ENCODE measurements at regions of chr14 and their contacts with region 1.

Region 1: DNA sequence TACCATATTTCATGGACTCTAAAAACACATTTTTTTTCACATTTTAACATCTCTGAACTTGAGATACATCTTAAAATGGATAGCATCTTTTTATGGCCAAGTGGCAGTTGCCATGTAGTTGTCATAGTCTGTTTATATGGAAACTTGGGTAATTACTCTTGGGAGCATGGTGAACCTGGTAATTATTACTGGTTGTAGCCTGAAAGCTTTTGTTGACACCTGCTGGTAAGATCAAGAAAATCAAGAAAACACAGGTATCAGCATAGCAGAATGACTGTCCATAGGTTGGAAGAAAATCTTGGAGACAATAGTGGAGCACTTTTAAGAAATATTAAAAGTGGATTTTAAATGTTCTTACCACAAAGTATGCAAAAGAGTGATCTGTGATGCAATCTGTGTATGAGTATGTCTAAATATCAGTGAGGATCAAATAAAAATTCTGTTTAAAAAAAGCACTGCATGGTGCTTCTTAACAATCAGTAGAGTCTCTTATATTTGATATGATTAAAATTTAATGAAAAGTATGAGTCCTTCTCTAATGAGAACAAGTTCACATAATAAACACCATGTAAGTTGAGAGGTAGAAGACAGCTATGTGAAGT is 44.2 kb downstream of the TTC8 start:
- DNase-seq: peak in 3 of 14 experiments; percentile 23 to 35 (median 35)
- ATAC-seq: no peak
- H3K4me3 ChIP-seq: no peak overlapping the region
- H3K4me3 Mint-ChIP-seq: no peak overlapping the region
- H3K27ac ChIP-seq: no peak overlapping the region
- H3K27ac Mint-ChIP-seq: no peak overlapping the region
- H3K4me1 ChIP-seq: no peaks in the 10 kb centered on the region
- H3K4me1 Mint-ChIP-seq: no peaks in the 10 kb centered on the region
- H3K27me3 ChIP-seq: no peaks in the 10 kb centered on the region
- H3K27me3 Mint-ChIP-seq: no peaks in the 10 kb centered on the region
- CTCF ChIP-seq: peak; percentile 58

Region 2: DNA sequence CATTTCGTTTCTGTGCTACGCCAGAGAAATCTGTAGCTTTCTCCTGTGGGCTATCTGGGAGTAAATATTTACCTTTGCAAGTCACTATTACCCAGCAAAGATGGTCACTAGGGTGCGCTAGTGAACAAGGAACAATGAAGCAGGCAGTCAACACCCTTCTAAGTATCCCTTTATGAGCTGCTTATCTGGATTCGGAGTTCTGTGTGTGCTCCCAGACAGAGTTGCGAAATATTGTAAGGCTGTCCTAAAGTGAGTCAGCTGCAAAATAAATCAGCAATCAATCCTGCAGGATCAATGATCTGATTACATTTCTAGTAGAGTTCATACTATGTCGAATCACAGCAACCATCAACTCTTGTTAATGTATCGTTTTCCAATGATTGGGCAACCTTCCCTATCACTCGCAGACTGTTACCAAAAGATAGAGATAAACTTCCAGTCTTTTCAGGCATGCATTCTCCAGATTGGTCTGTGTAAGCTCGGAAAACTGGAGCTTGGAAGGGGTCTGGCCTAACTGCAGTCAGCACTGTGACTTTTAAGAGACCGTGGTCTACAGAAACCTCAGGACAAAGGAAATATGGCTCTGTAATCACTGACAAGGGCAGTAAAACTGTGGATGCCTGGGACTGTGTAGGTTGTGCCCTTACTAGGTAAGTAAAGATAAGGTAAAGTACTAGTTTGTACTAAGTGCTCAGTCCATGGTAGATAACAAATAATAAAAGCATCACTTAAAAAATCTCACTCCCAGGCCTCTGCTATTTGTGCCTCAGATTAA is 679.1 kb before region 1 on chr14:
- CTCF ChIA-PET with region 1: no interaction called
- POLR2A ChIA-PET with region 1: no interaction called
- intact Hi-C with region 1: loop called in 1 of 2 experiments (anchors 10 kb)
- DNase-seq: peak in 11 of 14 experiments; percentile 9 to 67 (median 29)
- ATAC-seq: no peak
- H3K4me3 ChIP-seq: no peak overlapping the region
- H3K4me3 Mint-ChIP-seq: no peak overlapping the region
- H3K27ac ChIP-seq: no peak overlapping the region
- H3K27ac Mint-ChIP-seq: no peak overlapping the region
- H3K4me1 ChIP-seq: peaks cover 6% of the 10 kb centered on the region
- H3K4me1 Mint-ChIP-seq: peaks cover 5% of the 10 kb centered on the region
- H3K27me3 ChIP-seq: peaks cover 7 to 8% of the 10 kb centered on the region in 2 experiments
- H3K27me3 Mint-ChIP-seq: peaks cover 36% of the 10 kb centered on the region
- CTCF ChIP-seq: peak; percentile 46

Region 3: GRCh38 chr14:88492272-88493089 is 376.2 kb before region 1 on chr14:
- CTCF ChIA-PET with region 1: interaction called, 3 read pairs
- POLR2A ChIA-PET with region 1: no interaction called
- intact Hi-C with region 1: loop called (anchors 2 kb)
- DNase-seq: peak; percentile 22 to 80 (median 47)
- ATAC-seq: peak; percentile 72
- H3K4me3 ChIP-seq: no peak overlapping the region
- H3K4me3 Mint-ChIP-seq: no peak overlapping the region
- H3K27ac ChIP-seq: no peak overlapping the region
- H3K27ac Mint-ChIP-seq: no peak overlapping the region
- H3K4me1 ChIP-seq: no peaks in the 10 kb centered on the region
- H3K4me1 Mint-ChIP-seq: no peaks in the 10 kb centered on the region
- H3K27me3 ChIP-seq: no peaks in the 10 kb centered on the region
- H3K27me3 Mint-ChIP-seq: peaks cover 5% of the 10 kb centered on the region
- CTCF ChIP-seq: peak; percentile 85

Region 4: GRCh38 chr14:88667555-88668273 is 200.9 kb before region 1 on chr14:
- CTCF ChIA-PET with region 1: interaction called, 7 read pairs
- POLR2A ChIA-PET with region 1: no interaction called
- intact Hi-C with region 1: loop called (anchors 1 to 2 kb)
- DNase-seq: peak in 13 of 14 experiments; percentile 2 to 79 (median 32)
- ATAC-seq: peak; percentile 65
- H3K4me3 ChIP-seq: no peak overlapping the region
- H3K4me3 Mint-ChIP-seq: no peak overlapping the region
- H3K27ac ChIP-seq: no peak overlapping the region
- H3K27ac Mint-ChIP-seq: no peak overlapping the region
- H3K4me1 ChIP-seq: peaks cover 4% of the 10 kb centered on the region
- H3K4me1 Mint-ChIP-seq: no peaks in the 10 kb centered on the region
- H3K27me3 ChIP-seq: no peaks in the 10 kb centered on the region
- H3K27me3 Mint-ChIP-seq: no peaks in the 10 kb centered on the region
- CTCF ChIP-seq: peak; percentile 81

Measured in CD4-positive, alpha-beta T cell (primary cell).